ENCODE measurements at regions of chr12 and their contacts with region 1.

Region 1: GRCh38 chr12:92995258-92995903 is 66.3 kb upstream of the EEA1 start:
- DNase-seq: no peak
- H3K4me3 ChIP-seq: no peak overlapping the region
- H3K27ac ChIP-seq: no peak overlapping the region
- H3K4me1 ChIP-seq: no peaks in the 10 kb centered on the region
- H3K27me3 ChIP-seq: no peaks in the 10 kb centered on the region
- CTCF ChIP-seq: no peak
- POLR2A ChIP-seq: no peak

Region 2: DNA sequence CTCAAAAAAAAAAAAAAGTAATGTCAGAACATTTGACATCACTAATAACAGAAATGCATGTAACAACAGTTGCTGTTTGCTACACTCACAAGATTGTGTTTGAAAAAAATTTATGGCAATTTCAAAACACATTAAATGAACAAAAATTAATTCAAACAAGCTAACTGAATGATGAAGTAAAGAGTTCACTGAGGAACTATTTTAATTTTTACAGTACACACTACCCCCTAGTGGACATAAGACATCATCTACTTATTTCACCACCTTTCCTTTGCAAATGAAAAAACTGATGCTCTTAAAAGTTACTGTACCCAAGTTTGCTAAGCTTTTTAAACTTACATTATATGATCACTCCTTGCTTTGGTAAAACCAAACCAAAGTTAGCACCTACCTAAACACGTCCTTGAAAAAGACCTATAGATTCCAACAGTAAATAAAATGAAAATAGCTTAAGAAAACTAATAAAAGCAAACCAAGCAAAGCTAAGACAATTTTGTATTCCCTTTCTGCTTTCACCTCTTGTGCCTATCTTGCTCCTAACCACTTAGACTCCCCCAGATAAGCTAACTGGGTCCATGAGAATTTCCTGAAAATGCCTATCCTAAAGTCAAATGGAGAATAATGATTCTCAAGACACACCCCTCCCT is 424.1 kb after region 1 on chr12:
- intact Hi-C with region 1: loop called (anchors 10 kb)
- DNase-seq: no peak
- H3K4me3 ChIP-seq: no peak overlapping the region
- H3K27ac ChIP-seq: no peak overlapping the region
- H3K4me1 ChIP-seq: peaks cover 27% of the 10 kb centered on the region
- H3K27me3 ChIP-seq: no peaks in the 10 kb centered on the region
- CTCF ChIP-seq: peak in 2 of 3 experiments; percentile 48 to 77
- POLR2A ChIP-seq: no peak